Activated CD8-positive, alpha-beta T cell treated with anti-CD3 and anti-CD28 coated beads, Interleukin-2, amount 10 ng/mL, durations not matched to agents 7 days and 5 days (primary cell): ENCODE measurements at regions of chr10 and their contacts with region 1.

Region 1: DNA sequence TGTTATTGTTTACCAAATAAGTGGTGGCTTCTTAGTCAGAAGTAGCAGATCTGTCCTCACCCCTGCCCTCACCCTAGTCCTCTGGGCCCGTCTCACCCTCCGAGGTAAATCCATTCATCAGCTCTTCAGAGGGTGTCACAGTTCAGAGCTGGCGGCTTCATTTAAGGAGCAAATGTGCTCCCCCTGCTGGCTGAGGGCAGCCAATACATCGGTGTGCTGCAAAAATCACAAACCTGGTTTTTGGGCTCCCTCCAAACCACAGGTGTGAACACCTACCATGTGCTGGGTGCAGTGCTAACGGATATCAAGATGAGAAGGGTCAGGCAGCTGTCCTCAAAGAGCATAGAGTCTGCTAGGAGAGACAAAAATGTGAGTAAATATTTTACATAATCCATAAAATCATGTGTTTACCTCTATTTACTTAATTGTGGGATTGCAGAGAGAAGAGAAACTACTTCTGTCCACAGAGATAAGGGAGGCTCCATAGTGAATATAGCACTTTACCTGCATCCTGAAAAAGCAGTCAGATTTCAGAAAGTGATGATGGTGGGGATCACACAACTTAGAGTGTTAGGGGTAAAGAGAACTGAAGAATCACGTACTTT is 15.5 kb upstream of the CRTAC1 start:
- DNase-seq: peak; percentile 76
- ATAC-seq: peak; percentile 80
- H3K4me3 Mint-ChIP-seq: no peak overlapping the region
- H3K27ac Mint-ChIP-seq: no peak overlapping the region
- H3K4me1 Mint-ChIP-seq: no peaks in the 10 kb centered on the region
- H3K27me3 Mint-ChIP-seq: peaks cover 24% of the 10 kb centered on the region

Region 2: GRCh38 chr10:97904576-97904975 is 141.3 kb before region 1 on chr10:
- CTCF ChIA-PET with region 1: interaction called, 11 read pairs
- POLR2A ChIA-PET with region 1: no interaction called
- DNase-seq: no peak
- ATAC-seq: no peak
- H3K4me3 Mint-ChIP-seq: no peak overlapping the region
- H3K27ac Mint-ChIP-seq: no peak overlapping the region
- H3K4me1 Mint-ChIP-seq: no peaks in the 10 kb centered on the region
- H3K27me3 Mint-ChIP-seq: peaks cover 7% of the 10 kb centered on the region

Region 3: GRCh38 chr10:97914837-97915211 is 131.1 kb before region 1 on chr10:
- CTCF ChIA-PET with region 1: interaction called, 158 read pairs
- POLR2A ChIA-PET with region 1: no interaction called
- DNase-seq: peak; percentile 82
- ATAC-seq: peak; percentile 89
- H3K4me3 Mint-ChIP-seq: no peak overlapping the region
- H3K27ac Mint-ChIP-seq: no peak overlapping the region
- H3K4me1 Mint-ChIP-seq: peaks cover 2% of the 10 kb centered on the region
- H3K27me3 Mint-ChIP-seq: peaks cover 8% of the 10 kb centered on the region

Region 4: DNA sequence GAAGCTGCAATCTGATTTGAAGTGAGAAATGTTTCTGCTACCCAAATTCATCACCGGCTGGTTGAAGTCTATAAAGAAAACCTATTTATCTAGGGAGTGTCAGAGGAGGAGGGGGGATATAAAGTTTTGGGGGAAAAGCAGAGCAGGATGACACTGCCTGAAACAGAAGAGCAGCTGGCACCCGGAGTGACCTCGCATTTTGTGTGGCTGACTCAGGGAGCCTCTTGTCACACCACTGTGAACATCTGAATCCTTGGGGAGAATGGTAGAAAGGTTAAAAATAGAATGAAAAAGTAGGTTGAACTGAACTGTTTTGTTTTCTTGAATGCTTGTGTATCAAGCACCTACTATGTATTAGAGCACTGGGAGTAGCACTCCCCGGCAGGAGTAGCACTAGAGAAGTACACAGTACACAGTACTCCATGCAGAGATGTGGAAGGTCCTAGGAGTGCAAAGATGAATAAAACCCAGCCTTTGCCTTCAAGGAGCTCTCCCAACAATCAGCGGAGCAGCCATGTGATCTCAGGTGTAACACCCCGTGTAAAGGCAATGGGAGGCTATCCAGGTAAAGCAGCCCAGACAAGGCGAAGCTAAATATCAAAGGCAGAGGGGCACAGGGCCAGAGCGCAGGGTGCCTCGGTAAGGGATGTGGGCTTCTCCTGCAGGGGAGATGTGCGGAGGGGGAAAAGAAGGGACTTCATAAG is 29.0 kb before region 1 on chr10:
- CTCF ChIA-PET with region 1: interaction called, 18 read pairs
- POLR2A ChIA-PET with region 1: no interaction called
- DNase-seq: no peak
- ATAC-seq: no peak
- H3K4me3 Mint-ChIP-seq: no peak overlapping the region
- H3K27ac Mint-ChIP-seq: no peak overlapping the region
- H3K4me1 Mint-ChIP-seq: no peaks in the 10 kb centered on the region
- H3K27me3 Mint-ChIP-seq: peaks cover 14% of the 10 kb centered on the region

Region 5: DNA sequence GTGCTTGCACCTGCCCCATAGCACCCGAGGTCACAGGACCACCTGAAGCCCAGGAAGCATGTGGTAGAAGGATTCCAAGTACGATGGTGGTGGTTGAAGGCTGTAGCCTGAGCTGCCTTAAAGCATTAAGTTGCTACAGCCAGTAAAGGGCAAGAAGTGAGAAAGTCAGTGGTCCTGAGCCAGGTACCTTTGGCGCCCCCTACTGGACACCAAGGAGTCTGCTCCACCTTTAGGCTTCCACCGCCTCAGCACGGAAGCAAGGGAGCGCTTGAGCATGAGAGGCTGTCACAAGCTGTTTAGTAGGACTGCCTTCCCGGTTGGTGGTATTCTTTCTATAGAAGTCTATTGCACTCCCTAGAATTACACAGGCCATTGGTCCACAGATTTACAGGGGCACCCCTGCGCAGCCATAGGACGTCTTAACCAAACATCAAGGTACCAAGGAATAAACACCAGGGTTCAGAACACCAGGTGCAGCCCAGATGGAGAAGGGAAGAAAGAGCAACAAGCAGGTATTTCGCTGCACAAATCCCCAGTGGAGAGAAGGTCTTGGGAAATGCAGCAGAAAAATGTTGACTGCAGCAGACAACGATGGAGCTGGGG is 17.6 kb before region 1 on chr10:
- CTCF ChIA-PET with region 1: interaction called, 53 read pairs
- POLR2A ChIA-PET with region 1: no interaction called
- DNase-seq: peak; percentile 81
- ATAC-seq: peak; percentile 80
- H3K4me3 Mint-ChIP-seq: no peak overlapping the region
- H3K27ac Mint-ChIP-seq: no peak overlapping the region
- H3K4me1 Mint-ChIP-seq: peaks cover 3% of the 10 kb centered on the region
- H3K27me3 Mint-ChIP-seq: peaks cover 58% of the 10 kb centered on the region

Region 6: GRCh38 chr10:98097616-98098015 is 51.7 kb after region 1 on chr10:
- CTCF ChIA-PET with region 1: no interaction called
- POLR2A ChIA-PET with region 1: no interaction called
- DNase-seq: no peak
- ATAC-seq: no peak
- H3K4me3 Mint-ChIP-seq: no peak overlapping the region
- H3K27ac Mint-ChIP-seq: no peak overlapping the region
- H3K4me1 Mint-ChIP-seq: no peaks in the 10 kb centered on the region
- H3K27me3 Mint-ChIP-seq: peaks cover 11% of the 10 kb centered on the region